Natural killer cell (primary cell): ENCODE measurements at regions of chr19 and their contacts with region 1.

Region 1: GRCh38 chr19:35716801-35717666 is 769 bp upstream of the KMT2B start:
- DNase-seq: peak; percentile 89 to 98
- ATAC-seq: peak; percentile 83 to 93 (median 86)
- H3K4me3 ChIP-seq: peak overlapping the region; percentile 86
- H3K4me3 Mint-ChIP-seq: peak overlapping the region; percentile 99
- H3K27ac ChIP-seq: peak overlapping the region; percentile 79
- H3K27ac Mint-ChIP-seq: peak overlapping the region; percentile 94 to 98
- H3K4me1 ChIP-seq: peaks cover 48% of the 10 kb centered on the region
- H3K4me1 Mint-ChIP-seq: peaks cover 16 to 57% of the 10 kb centered on the region in 2 donors
- H3K27me3 ChIP-seq: no peaks in the 10 kb centered on the region
- H3K27me3 Mint-ChIP-seq: no peaks in the 10 kb centered on the region
- CTCF ChIP-seq: peak; percentile 95

Region 2: GRCh38 chr19:35545001-35545911 is 171.8 kb before region 1 on chr19 and contains the start of gene TMEM147:
- intact Hi-C with region 1: loop called (anchors 2 kb)
- DNase-seq: peak; percentile 79 to 83
- ATAC-seq: peak; percentile 73 to 87 (median 81)
- H3K4me3 ChIP-seq: peak within 1 kb of the TSS; percentile 95
- H3K4me3 Mint-ChIP-seq: peak within 1 kb of the TSS; percentile 95
- H3K27ac ChIP-seq: peak within 1 kb of the TSS; percentile 77
- H3K27ac Mint-ChIP-seq: peak within 1 kb of the TSS; percentile 80 to 91
- H3K4me1 ChIP-seq: peaks cover 28% of the 10 kb centered on the region
- H3K4me1 Mint-ChIP-seq: peaks cover 34 to 49% of the 10 kb centered on the region in 2 donors
- H3K27me3 ChIP-seq: no peaks in the 10 kb centered on the region
- H3K27me3 Mint-ChIP-seq: no peaks in the 10 kb centered on the region
- CTCF ChIP-seq: no peak
- total RNA-seq, gene TMEM147: 30.6 to 37.9 (median 31.2) TPM

Region 3: GRCh38 chr19:35693830-35694599 is 23.0 kb before region 1 on chr19:
- intact Hi-C with region 1: loop called (anchors 1 kb)
- DNase-seq: peak; percentile 78 to 96
- ATAC-seq: peak; percentile 100
- H3K4me3 ChIP-seq: no peak overlapping the region
- H3K4me3 Mint-ChIP-seq: no peak overlapping the region
- H3K27ac ChIP-seq: no peak overlapping the region
- H3K27ac Mint-ChIP-seq: no peak overlapping the region
- H3K4me1 ChIP-seq: no peaks in the 10 kb centered on the region
- H3K4me1 Mint-ChIP-seq: no peaks in the 10 kb centered on the region
- H3K27me3 ChIP-seq: no peaks in the 10 kb centered on the region
- H3K27me3 Mint-ChIP-seq: no peaks in the 10 kb centered on the region
- CTCF ChIP-seq: peak; percentile 97

Region 4: GRCh38 chr19:35740423-35741202 is 23.6 kb after region 1 on chr19:
- intact Hi-C with region 1: loop called (anchors 1 kb)
- DNase-seq: peak; percentile 91 to 97
- ATAC-seq: peak; percentile 66 to 84 (median 69)
- H3K4me3 ChIP-seq: peak overlapping the region; percentile 67
- H3K4me3 Mint-ChIP-seq: peak overlapping the region; percentile 94
- H3K27ac ChIP-seq: peak overlapping the region; percentile 62
- H3K27ac Mint-ChIP-seq: peak overlapping the region; percentile 96 to 99
- H3K4me1 ChIP-seq: peaks cover 51% of the 10 kb centered on the region
- H3K4me1 Mint-ChIP-seq: peaks cover 28 to 54% of the 10 kb centered on the region in 2 donors
- H3K27me3 ChIP-seq: no peaks in the 10 kb centered on the region
- H3K27me3 Mint-ChIP-seq: no peaks in the 10 kb centered on the region
- CTCF ChIP-seq: no peak

Region 5: DNA sequence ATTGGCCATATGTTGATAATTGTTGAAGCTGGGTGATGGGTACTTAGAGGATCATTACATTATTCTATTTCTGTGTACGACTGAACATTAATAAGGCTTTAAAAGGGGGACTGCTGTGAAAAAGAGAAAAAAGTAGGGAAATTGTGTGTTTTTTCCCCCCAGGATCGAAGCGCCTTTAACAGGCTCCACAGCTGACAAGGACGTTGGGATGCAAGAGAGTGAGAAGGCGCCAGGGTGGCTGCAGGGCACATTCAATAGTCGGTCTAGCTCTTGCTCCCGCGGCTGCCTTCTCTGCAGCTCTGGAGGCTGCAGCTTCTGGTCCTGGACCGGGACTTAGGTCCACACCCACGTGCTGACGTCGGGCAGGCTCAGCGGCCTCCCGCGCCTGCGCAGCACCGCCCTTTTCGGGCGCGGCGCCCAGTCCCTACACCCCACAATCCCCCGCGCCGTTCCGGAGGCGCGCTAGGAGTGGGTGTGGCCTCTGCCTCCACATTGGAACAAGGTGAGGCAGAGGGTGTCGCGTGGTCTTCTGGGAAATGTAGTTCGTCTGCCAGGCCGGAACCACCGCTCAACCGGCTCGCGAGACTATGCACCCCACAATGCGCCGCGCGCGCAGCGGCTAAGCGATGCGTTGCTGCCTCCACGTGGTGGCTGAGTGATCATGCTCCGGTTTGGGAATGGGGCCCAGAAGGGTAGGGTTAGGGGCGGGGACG is 214.3 kb after region 1 on chr19:
- intact Hi-C with region 1: loop called (anchors 1 kb)
- DNase-seq: peak; percentile 97 to 100
- ATAC-seq: peak; percentile 89 to 98 (median 91)
- H3K4me3 ChIP-seq: peak overlapping the region; percentile 26
- H3K4me3 Mint-ChIP-seq: peak overlapping the region; percentile 83
- H3K27ac ChIP-seq: peak overlapping the region; percentile 86
- H3K27ac Mint-ChIP-seq: peak overlapping the region; percentile 79 to 91
- H3K4me1 ChIP-seq: peaks cover 56% of the 10 kb centered on the region
- H3K4me1 Mint-ChIP-seq: peaks cover 24 to 54% of the 10 kb centered on the region in 2 donors
- H3K27me3 ChIP-seq: peaks cover 6% of the 10 kb centered on the region
- H3K27me3 Mint-ChIP-seq: peaks cover 0 to 4% of the 10 kb centered on the region in 2 donors
- CTCF ChIP-seq: peak; percentile 83